ENCODE measurements at regions of chr3 and their contacts with region 1.

Region 1: GRCh38 chr3:138946181-138947059 is 517 bp downstream of the FOXL2 start:
- DNase-seq: peak; percentile 77
- H3K4me3 Mint-ChIP-seq: peak overlapping the region; percentile 59
- H3K27ac Mint-ChIP-seq: peak overlapping the region; percentile 48
- H3K4me1 Mint-ChIP-seq: peaks cover 21% of the 10 kb centered on the region
- H3K27me3 Mint-ChIP-seq: peaks cover 83% of the 10 kb centered on the region

Region 2: DNA sequence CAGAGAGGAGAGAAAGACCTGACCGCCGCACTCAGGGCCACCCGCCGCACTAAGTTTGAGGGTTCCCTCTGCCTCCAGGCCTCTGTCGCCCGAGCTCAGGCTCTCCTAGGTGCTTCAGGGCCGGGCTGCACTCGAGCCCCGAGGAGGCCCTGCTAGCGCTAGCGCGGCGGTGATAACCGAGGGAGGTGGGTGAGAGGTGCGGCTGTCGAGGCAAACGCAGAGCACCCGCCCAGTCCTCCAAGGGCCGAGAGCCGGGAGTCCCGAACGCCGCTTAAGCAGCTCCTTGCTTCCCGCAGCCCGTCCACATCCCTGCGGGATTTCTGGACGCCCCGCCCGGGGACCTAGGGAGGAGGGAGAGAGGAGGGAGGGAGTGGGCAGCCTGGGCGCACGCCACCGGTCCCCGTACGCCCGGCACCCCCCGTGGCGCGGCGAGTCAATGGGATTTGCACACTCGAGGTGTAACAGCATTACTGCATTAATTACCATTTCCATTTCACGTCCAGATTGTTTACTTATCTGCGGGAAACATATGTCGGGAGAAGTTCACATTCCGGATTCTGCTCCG is 1175.5 kb before region 1 on chr3:
- intact Hi-C with region 1: loop called (anchors 5 kb)
- DNase-seq: peak; percentile 59
- H3K4me3 Mint-ChIP-seq: no peak overlapping the region
- H3K27ac Mint-ChIP-seq: no peak overlapping the region
- H3K4me1 Mint-ChIP-seq: peaks cover 3% of the 10 kb centered on the region
- H3K27me3 Mint-ChIP-seq: peaks cover 82% of the 10 kb centered on the region

Region 3: GRCh38 chr3:138818185-138818860 is 128.1 kb before region 1 on chr3:
- intact Hi-C with region 1: no loop called
- DNase-seq: no peak
- H3K4me3 Mint-ChIP-seq: no peak overlapping the region
- H3K27ac Mint-ChIP-seq: no peak overlapping the region
- H3K4me1 Mint-ChIP-seq: peaks cover 14% of the 10 kb centered on the region
- H3K27me3 Mint-ChIP-seq: no peaks in the 10 kb centered on the region

Region 4: GRCh38 chr3:138935848-138936740 is 10.3 kb before region 1 on chr3:
- intact Hi-C with region 1: loop called (anchors 1 kb)
- DNase-seq: peak; percentile 91
- H3K4me3 Mint-ChIP-seq: peak overlapping the region; percentile 76
- H3K27ac Mint-ChIP-seq: no peak overlapping the region
- H3K4me1 Mint-ChIP-seq: peaks cover 14% of the 10 kb centered on the region
- H3K27me3 Mint-ChIP-seq: peaks cover 76% of the 10 kb centered on the region